Dendritic cell treated with granulocyte-macrophage colony-stimulating factor and Interleukin-4, amounts not matched to agents 40 ng/mL and 50 ng/mL, for 4 days (primary cell): ENCODE measurements at regions of chr6 and their contacts with region 1.

Region 1: DNA sequence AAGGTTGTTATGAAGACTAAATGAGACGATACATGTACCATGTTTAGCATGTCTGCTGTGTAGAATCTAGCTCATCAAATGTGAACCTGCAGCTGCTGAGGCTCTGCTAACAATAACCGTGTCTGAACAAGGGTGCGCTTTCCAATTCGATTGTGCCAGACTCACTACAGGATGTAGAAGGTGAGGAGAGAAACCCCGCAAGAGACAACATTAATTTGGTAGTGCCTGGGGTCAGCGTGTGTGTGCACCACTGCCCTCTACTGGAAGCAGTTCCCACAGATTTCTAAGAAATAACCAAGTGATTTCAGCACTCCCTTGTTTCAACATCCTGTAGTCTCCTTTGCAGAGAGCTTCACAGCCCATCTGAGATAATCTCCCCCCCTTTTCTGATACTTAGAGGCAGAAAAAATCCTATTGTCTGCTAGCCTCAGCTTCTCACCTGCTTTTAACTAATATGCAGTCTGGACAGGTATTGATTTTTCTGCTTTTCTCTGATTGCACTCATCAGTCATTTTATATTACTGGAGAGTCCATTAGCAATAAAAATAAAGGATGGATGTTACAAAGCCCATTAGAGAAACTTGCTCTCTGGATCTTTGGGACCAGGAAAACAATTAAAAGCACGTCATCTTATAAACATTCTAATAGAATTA is 96.7 kb upstream of the BACH2 start:
- H3K4me3 Mint-ChIP-seq: no peak overlapping the region
- H3K27ac Mint-ChIP-seq: no peak overlapping the region
- H3K4me1 Mint-ChIP-seq: no peaks in the 10 kb centered on the region
- H3K27me3 Mint-ChIP-seq: no peaks in the 10 kb centered on the region

Region 2: GRCh38 chr6:89970609-89971337 is 422.6 kb before region 1 on chr6:
- intact Hi-C with region 1: loop called (anchors 1 kb)
- H3K4me3 Mint-ChIP-seq: no peak overlapping the region
- H3K27ac Mint-ChIP-seq: no peak overlapping the region
- H3K4me1 Mint-ChIP-seq: no peaks in the 10 kb centered on the region
- H3K27me3 Mint-ChIP-seq: no peaks in the 10 kb centered on the region

Region 3: GRCh38 chr6:90285611-90286381 is 107.6 kb before region 1 on chr6:
- intact Hi-C with region 1: loop called (anchors 5 kb)
- H3K4me3 Mint-ChIP-seq: peak overlapping the region; percentile 32
- H3K27ac Mint-ChIP-seq: peak overlapping the region; percentile 74
- H3K4me1 Mint-ChIP-seq: peaks cover 27% of the 10 kb centered on the region
- H3K27me3 Mint-ChIP-seq: peaks cover 13% of the 10 kb centered on the region

Region 4: GRCh38 chr6:90478789-90479602 is 85.6 kb after region 1 on chr6:
- intact Hi-C with region 1: loop called (anchors 1 kb)
- H3K4me3 Mint-ChIP-seq: no peak overlapping the region
- H3K27ac Mint-ChIP-seq: peak overlapping the region; percentile 44
- H3K4me1 Mint-ChIP-seq: peaks cover 8% of the 10 kb centered on the region
- H3K27me3 Mint-ChIP-seq: no peaks in the 10 kb centered on the region

Region 5: DNA sequence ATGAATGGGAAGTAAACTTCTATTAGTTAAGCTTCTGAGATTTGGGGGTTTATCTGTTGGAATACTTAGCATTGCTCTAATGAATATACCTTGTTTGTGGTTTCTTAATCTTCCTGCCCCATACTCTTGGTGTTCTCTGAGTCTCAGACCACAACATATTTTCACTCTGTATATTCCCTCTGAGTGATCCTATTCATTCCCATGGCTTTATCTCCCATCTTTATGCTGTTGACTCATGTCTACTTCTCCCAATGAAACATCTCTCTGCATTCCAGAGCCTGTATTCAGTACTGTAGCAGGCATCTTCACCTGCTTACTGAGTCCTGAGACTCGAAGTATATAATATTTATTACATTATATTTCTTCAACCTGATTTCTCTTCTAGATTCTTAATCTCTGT is 477.2 kb after region 1 on chr6:
- intact Hi-C with region 1: no loop called
- H3K4me3 Mint-ChIP-seq: no peak overlapping the region
- H3K27ac Mint-ChIP-seq: no peak overlapping the region
- H3K4me1 Mint-ChIP-seq: no peaks in the 10 kb centered on the region
- H3K27me3 Mint-ChIP-seq: no peaks in the 10 kb centered on the region

Region 6: GRCh38 chr6:91221072-91221720 is 827.8 kb after region 1 on chr6:
- intact Hi-C with region 1: no loop called
- H3K4me3 Mint-ChIP-seq: no peak overlapping the region
- H3K27ac Mint-ChIP-seq: no peak overlapping the region
- H3K4me1 Mint-ChIP-seq: no peaks in the 10 kb centered on the region
- H3K27me3 Mint-ChIP-seq: no peaks in the 10 kb centered on the region